SK-N-SH (cell line): ENCODE measurements at regions of chr7 and their contacts with region 1.

Region 1: GRCh38 chr7:95916573-95917297 is 144.4 kb downstream of the DYNC1I1 start:
- DNase-seq: peak; percentile 57
- H3K4me3 ChIP-seq: peak overlapping the region; percentile 6 to 14; a peak in 2 of 4 replicates
- H3K27ac ChIP-seq: no peak overlapping the region
- H3K4me1 ChIP-seq: no peaks in the 10 kb centered on the region
- H3K27me3 ChIP-seq: no peaks in the 10 kb centered on the region
- CTCF ChIP-seq: peak; percentile 100
- EP300 ChIP-seq: no peak
- RAD21 ChIP-seq: peak; percentile 99

Region 2: DNA sequence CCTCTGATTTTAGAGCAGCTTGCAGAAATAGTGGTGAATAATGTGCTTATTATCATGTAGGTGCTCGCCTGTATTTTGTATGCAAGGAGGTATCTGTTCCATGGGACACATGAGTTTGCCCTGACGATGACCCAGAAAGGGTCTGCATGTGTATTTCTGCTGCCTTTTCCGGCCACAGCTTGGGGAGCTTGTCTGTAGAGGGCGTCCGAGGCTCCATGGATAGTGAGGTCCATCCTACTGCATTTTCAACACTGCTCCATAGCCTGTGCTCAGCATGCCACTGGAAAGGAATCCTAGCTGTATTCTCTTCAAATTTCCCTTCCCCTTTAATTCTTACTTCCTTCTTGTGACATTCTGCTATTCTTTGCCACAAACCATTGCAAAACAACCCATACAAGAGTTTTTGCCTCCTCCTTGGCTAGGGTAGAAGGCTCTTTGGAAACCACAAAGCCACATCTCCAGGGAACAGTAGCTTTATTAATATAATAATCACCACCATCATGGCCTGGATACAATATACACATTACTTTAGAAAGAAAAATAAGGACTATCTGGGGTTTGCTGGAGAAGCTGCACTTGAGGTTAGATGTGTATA is 16.7 kb before region 1 on chr7:
- CTCF ChIA-PET with region 1: interaction called, 191 read pairs
- POLR2A ChIA-PET with region 1: no interaction called
- DNase-seq: no peak
- H3K4me3 ChIP-seq: no peak overlapping the region
- H3K27ac ChIP-seq: no peak overlapping the region
- H3K4me1 ChIP-seq: peaks cover 0 to 15% of the 10 kb centered on the region in 2 experiments; a peak in 3 of 4 replicates
- H3K27me3 ChIP-seq: no peaks in the 10 kb centered on the region
- CTCF ChIP-seq: no peak
- EP300 ChIP-seq: no peak
- RAD21 ChIP-seq: no peak

Region 3: GRCh38 chr7:95933618-95934017 is 16.9 kb after region 1 on chr7:
- CTCF ChIA-PET with region 1: interaction called, 20 read pairs
- POLR2A ChIA-PET with region 1: no interaction called
- DNase-seq: no peak
- H3K4me3 ChIP-seq: no peak overlapping the region
- H3K27ac ChIP-seq: no peak overlapping the region
- H3K4me1 ChIP-seq: no peaks in the 10 kb centered on the region
- H3K27me3 ChIP-seq: no peaks in the 10 kb centered on the region
- CTCF ChIP-seq: no peak
- EP300 ChIP-seq: no peak
- RAD21 ChIP-seq: no peak

Region 4: GRCh38 chr7:96016056-96016586 is 99.4 kb after region 1 on chr7:
- CTCF ChIA-PET with region 1: interaction called, 10 read pairs
- POLR2A ChIA-PET with region 1: no interaction called
- DNase-seq: no peak
- H3K4me3 ChIP-seq: no peak overlapping the region
- H3K27ac ChIP-seq: no peak overlapping the region
- H3K4me1 ChIP-seq: no peaks in the 10 kb centered on the region; a peak in 1 of 4 replicates
- H3K27me3 ChIP-seq: no peaks in the 10 kb centered on the region
- CTCF ChIP-seq: no peak
- EP300 ChIP-seq: no peak
- RAD21 ChIP-seq: no peak

Region 5: GRCh38 chr7:97016381-97017191 is 1099.9 kb after region 1 on chr7:
- CTCF ChIA-PET with region 1: interaction called, 156 read pairs
- POLR2A ChIA-PET with region 1: no interaction called
- DNase-seq: peak; percentile 89
- H3K4me3 ChIP-seq: peak overlapping the region; percentile 38 to 53
- H3K27ac ChIP-seq: no peak overlapping the region
- H3K4me1 ChIP-seq: peaks cover 0 to 8% of the 10 kb centered on the region in 2 experiments; a peak in 3 of 4 replicates
- H3K27me3 ChIP-seq: peaks cover 27% of the 10 kb centered on the region
- CTCF ChIP-seq: no peak
- EP300 ChIP-seq: no peak
- RAD21 ChIP-seq: no peak

Region 6: DNA sequence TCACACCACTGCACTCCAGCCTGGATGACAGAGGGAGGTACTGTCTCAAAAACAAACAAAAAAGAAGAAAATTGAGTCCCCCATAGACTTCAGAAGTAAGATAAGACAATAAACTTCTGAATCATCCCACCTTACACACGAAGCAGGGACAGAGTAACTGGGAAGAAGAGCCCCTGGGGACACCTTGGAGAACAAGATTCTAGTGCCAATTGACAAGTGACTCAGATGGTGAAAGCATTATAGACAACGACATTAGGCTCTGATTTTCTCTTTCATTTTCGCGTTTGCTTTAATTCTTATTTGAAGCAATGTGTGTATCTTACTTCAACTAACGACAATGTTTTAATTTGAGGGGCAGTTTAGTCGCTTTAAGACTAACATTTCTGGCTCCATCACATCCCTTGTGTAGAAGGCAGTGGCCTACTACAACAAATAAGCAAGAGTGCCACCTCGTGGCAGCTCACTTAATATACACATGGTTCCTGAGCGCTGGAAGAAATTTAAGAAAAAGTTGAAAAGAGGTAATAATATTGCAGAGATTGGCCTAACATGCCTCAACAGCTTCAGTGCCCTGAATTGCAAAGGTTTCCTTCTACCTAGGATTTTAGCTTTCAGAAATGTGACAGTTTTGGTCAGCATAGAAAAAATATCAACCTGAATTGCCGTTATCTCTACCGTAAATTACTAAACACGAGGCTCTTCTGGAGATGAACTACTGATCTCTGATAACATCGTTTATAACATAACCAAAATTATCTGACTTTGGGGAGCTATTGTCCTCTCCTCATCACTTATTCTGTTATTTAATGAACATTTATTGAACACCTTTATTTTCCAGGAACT is 1918.8 kb after region 1 on chr7:
- CTCF ChIA-PET with region 1: interaction called, 20 read pairs
- POLR2A ChIA-PET with region 1: no interaction called
- DNase-seq: peak; percentile 61
- H3K4me3 ChIP-seq: peak overlapping the region in 1 of 2 experiments; percentile 2; a peak in 1 of 4 replicates
- H3K27ac ChIP-seq: no peak overlapping the region
- H3K4me1 ChIP-seq: no peaks in the 10 kb centered on the region
- H3K27me3 ChIP-seq: peaks cover 32% of the 10 kb centered on the region
- CTCF ChIP-seq: peak; percentile 95
- EP300 ChIP-seq: no peak
- RAD21 ChIP-seq: peak; percentile 75